MCF 10A (cell line): ENCODE measurements at regions of chr9 and their contacts with region 1.

Region 1: DNA sequence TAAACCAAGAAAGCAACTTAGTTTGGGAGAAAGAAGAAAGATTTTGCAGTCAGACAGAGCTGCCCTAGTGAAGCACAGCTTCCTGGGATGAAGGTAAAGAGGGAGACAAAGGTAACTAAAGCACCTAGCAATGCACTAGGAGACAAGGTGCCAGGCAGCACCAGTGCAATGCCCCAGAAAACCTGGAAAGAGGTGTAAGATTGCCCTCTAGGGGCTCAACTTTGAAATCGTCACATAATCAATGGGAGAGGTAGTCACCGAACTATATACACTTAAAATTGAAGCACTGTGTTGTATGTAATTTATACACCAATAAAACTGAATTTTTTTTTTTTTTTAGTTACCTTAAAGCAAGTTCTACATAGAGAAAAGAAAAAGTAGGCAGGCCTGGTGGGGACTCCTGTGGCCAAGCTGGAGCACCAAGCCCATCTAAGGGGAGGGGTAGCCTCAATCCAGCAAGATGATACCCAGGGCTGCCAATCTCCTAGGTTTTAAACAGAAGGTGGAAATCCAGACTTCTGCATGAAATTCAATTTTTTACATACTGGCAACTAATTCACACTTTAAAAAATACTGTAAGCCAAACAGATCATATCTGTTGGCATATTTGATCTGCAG is 48.2 kb downstream of the CDK5RAP2 start:
- DNase-seq: peak; percentile 81
- H3K4me3 Mint-ChIP-seq: peak overlapping the region; percentile 74
- H3K27ac Mint-ChIP-seq: peak overlapping the region; percentile 89
- H3K4me1 Mint-ChIP-seq: peaks cover 28% of the 10 kb centered on the region
- H3K27me3 Mint-ChIP-seq: no peaks in the 10 kb centered on the region
- CTCF ChIP-seq: peak; percentile 65

Region 2: GRCh38 chr9:119375892-119376291 is 1155.9 kb before region 1 on chr9:
- CTCF ChIA-PET with region 1: interaction called, 4 read pairs
- POLR2A ChIA-PET with region 1: no interaction called
- intact Hi-C with region 1: loop called (anchors 5 kb)
- DNase-seq: peak; percentile 62
- H3K4me3 Mint-ChIP-seq: no peak overlapping the region
- H3K27ac Mint-ChIP-seq: no peak overlapping the region
- H3K4me1 Mint-ChIP-seq: no peaks in the 10 kb centered on the region
- H3K27me3 Mint-ChIP-seq: no peaks in the 10 kb centered on the region
- CTCF ChIP-seq: peak; percentile 36

Region 3: DNA sequence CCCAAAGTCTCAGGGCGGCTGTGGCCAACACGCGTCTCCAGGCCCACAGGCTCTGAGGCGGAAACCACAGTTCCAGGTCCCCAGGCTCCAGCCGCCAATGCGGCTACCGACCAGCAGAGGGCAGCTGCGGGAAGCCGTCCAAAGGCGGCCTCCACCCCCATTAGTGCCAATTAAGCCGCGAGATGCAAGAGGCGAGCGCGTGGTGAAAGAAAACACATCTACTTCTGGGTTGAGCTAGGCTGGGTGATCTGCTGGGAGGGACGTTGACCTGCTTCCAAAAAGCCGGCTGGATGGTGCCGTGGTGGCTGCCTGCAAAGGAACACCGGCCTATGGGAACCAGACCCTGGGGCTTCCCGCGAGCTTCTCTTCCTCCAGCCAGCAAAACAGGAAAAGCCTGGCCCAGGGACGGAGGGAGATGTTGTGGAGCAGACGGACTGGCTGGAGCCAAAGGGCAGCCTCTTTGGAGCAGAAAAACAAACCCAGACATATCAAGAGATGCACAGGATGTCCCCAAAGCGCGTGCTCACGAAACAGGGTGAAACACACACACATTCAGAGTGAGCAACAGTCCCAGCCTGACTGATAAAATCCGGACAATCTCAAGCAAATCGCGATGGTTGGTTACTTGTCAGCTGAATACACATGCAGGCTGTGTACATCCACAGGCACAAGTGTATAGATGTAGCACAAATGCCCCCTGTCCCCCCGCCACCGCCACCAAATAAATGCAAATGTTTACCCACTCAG is 975.5 kb before region 1 on chr9:
- CTCF ChIA-PET with region 1: interaction called, 38 read pairs
- POLR2A ChIA-PET with region 1: no interaction called
- intact Hi-C with region 1: loop called (anchors 1 kb)
- DNase-seq: peak; percentile 40
- H3K4me3 Mint-ChIP-seq: no peak overlapping the region
- H3K27ac Mint-ChIP-seq: no peak overlapping the region
- H3K4me1 Mint-ChIP-seq: no peaks in the 10 kb centered on the region
- H3K27me3 Mint-ChIP-seq: peaks cover 12% of the 10 kb centered on the region
- CTCF ChIP-seq: peak; percentile 74

Region 4: GRCh38 chr9:120505186-120505585 is 26.6 kb before region 1 on chr9:
- CTCF ChIA-PET with region 1: interaction called, 15 read pairs
- POLR2A ChIA-PET with region 1: interaction called, 3 read pairs
- intact Hi-C with region 1: no loop called
- DNase-seq: peak; percentile 17
- H3K4me3 Mint-ChIP-seq: no peak overlapping the region
- H3K27ac Mint-ChIP-seq: peak overlapping the region; percentile 36
- H3K4me1 Mint-ChIP-seq: peaks cover 12% of the 10 kb centered on the region
- H3K27me3 Mint-ChIP-seq: no peaks in the 10 kb centered on the region
- CTCF ChIP-seq: no peak

Region 5: DNA sequence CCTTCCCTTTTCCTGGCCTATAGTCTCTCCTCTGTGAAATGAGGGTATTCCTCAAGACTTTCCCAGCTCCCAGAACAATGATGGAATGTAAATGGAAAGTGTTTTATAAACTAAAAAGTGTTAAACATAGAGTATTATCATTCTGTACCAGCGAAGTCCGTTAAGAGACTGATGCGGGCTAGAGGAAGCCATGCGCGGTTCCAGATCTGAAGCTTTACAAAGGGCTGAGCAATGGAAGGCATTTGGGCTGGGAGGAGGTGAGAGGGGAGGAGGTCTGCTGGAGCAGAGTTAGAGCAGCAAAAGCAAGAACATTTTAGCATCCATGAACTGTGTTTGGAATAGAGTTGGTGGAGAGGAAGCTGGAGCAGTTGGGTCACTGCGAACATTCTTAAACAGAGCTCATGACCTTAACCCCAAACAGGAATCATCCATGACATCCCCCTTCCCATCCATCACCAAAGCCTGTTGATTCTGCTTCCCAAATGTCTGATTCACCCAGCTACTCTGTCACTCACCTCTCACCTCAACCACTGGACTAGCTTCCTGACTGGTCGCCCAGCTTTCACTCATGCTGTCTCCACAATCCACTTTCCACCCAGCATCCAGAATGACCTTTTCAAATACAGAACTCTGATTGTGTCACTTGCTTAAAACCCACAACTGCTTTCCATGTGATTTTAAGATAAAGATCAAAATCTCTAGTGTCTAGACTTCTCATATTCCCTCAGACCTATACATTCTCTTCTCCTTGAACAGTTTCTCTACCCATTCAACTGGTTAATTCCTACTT is 11.1 kb after region 1 on chr9:
- CTCF ChIA-PET with region 1: interaction called, 25 read pairs
- POLR2A ChIA-PET with region 1: interaction called, 65 read pairs
- intact Hi-C with region 1: no loop called
- DNase-seq: no peak
- H3K4me3 Mint-ChIP-seq: no peak overlapping the region
- H3K27ac Mint-ChIP-seq: peak overlapping the region; percentile 41
- H3K4me1 Mint-ChIP-seq: peaks cover 17% of the 10 kb centered on the region
- H3K27me3 Mint-ChIP-seq: no peaks in the 10 kb centered on the region
- CTCF ChIP-seq: no peak